ENCODE measurements at regions of chr7 and their contacts with region 1.

Region 1: DNA sequence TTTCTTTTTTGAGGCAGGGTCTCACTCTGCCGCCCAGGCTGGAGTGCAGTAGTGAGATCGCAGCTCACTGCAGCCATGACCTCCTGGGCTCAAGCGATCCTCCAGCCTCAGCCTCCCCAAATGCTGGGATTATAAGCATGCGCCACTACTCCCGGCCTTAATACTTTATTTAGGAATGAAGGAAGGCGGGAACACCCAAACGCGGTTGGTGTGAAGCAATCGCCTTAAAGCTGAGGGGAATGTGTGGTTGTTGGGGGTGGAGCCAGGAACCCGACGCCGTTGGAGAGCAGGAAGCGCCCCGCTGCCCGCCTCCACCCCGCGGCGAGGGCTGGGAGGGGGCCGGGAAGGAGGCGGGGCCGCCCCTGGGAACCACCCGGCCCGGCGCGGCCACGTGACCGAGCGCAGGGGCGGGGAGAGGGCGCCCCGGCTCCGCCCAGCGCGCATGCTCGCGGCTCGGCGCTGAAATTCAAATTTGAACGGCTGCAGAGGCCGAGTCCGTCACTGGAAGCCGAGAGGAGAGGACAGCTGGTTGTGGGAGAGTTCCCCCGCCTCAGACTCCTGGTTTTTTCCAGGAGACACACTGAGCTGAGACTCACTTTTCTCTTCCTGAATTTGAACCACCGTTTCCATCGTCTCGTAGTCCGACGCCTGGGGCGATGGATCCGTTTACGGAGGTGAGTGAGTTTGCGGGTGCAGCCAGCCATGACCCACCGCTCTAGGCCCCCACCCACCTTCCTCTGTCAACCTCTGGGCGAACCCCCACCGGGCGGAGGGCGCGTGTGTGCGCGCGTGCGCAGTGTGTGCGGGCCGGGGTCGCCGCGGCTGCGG is at the start of gene ANLN:
- DNase-seq: peak; percentile 100
- H3K4me3 Mint-ChIP-seq: peak within 1 kb of the TSS; percentile 82
- H3K27ac Mint-ChIP-seq: peak within 1 kb of the TSS; percentile 92
- H3K4me1 Mint-ChIP-seq: peaks cover 54% of the 10 kb centered on the region
- H3K27me3 Mint-ChIP-seq: no peaks in the 10 kb centered on the region
- CTCF ChIP-seq: no peak
- total RNA-seq, gene ANLN: 207 and 274 TPM in 2 replicates

Region 2: DNA sequence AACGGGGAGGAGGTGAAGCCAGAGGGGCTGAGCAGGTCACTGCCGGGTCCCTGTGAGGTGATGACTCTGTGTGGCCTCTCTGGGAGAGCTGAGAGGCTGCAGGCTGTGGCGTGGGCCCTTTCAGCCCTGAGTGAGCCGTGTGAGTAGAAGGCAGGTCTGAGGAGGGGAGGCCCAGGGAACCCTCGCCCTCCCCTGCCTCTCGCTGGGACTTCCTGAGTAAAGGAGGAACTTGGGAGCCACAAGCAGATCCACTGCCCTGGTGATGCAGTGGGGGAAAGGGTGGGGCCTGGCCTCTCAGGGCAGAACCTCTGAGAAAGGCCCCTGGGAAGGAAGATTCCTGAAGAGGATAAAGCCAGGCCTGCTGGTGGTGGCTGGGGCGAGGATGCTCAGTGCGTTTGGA is 213.7 kb before region 1 on chr7:
- CTCF ChIA-PET with region 1: no interaction called
- intact Hi-C with region 1: no loop called
- DNase-seq: no peak
- H3K4me3 Mint-ChIP-seq: no peak overlapping the region
- H3K27ac Mint-ChIP-seq: no peak overlapping the region
- H3K4me1 Mint-ChIP-seq: peaks cover 8% of the 10 kb centered on the region
- H3K27me3 Mint-ChIP-seq: no peaks in the 10 kb centered on the region
- CTCF ChIP-seq: no peak

Region 3: DNA sequence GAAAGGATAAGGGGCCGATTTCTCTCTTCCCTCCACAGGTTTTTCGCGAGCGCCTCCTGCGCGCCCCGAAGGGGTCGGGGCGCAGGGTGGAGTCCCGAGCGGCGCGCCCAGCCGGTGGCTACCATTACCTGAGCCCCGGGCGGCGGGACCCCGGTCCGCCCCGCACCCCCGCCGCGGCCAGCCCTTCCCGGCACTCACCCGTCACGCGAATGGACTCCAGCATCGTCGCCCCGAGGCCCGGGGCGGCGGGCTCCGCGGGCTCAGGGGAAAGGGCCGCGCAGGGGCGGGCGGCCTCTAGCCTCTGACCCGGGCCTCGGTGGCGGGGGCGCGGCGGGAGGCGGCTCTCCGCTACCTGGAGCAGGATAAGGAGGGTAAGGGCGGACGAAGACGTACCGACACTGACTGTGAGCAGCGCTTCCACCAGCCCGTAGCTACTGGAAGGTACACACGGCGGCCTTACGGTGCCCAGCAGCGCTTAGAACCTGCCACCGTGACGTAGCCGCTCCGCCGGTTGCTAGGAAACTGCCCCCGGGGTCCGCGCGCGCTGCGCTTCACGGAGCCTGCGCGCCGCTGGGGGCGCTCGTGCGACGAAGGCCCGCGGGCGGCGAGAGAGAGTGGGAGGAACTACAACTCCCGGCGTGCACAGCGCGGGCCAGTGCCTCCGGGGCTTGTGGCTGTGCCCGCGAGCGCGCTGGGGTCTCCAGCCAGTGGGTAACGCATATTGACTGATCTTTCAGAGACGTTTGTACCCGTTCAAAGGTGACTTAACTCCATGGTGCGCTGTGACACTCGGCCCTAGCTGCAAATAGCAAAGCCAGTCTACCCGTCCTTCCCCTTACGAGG is 22.6 kb before region 1 on chr7:
- CTCF ChIA-PET with region 1: interaction called, 23 read pairs
- intact Hi-C with region 1: loop called (anchors 1 kb)
- DNase-seq: peak; percentile 98
- H3K4me3 Mint-ChIP-seq: peak overlapping the region; percentile 86
- H3K27ac Mint-ChIP-seq: peak overlapping the region; percentile 72
- H3K4me1 Mint-ChIP-seq: no peaks in the 10 kb centered on the region
- H3K27me3 Mint-ChIP-seq: no peaks in the 10 kb centered on the region
- CTCF ChIP-seq: peak; percentile 97

Measured in Calu3 (cell line).